ENCODE measurements at regions of chr1 and their contacts with region 1.

Region 1: DNA sequence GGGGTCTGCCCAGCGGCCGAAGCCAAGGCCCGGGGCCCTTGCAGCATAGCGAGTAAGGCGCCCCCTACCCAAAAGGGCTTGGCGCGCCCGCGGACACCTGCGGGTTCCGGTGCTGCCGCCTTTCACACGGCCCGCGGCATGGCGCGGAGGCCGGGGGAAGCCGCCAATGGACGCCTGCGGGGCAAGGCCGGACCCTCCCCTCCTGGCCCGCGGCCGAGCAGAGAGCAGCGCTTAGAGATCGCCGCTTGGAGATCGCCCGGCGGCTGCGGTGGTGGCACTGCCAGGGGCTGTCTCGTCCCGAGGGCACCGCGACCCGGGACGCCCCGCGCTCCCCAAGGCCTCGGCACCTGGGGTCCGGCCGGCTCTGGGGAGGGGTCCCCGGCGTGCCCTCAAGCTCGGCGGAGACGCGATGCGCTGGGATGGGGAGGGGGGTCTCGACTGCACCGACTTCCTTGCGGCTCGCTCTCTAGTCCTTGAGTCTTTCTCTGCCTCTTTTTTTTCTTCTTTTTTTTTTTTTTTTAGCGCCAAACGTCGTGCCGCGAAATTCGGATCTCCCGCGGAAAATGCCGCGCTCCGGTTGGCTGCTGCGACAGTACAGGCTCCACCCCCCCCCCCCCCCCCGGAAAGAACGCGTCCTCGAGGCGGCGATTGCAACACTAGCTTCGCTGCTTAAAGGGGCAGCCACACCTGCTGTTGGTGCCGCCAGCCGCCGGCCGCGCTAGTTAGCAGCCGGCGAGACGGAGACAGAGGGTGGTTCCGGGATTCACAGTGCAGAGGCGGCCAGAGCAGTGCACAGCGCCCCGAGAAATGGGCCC is at the start of gene E2F2:
- DNase-seq: peak; percentile 97
- H3K4me3 ChIP-seq: peak within 1 kb of the TSS; percentile 84
- H3K27ac ChIP-seq: peak within 1 kb of the TSS; percentile 98
- H3K4me1 ChIP-seq: peaks cover 67% of the 10 kb centered on the region
- CTCF ChIP-seq: peak; percentile 60; the same call in 1 of the 2 replicates
- total RNA-seq, gene E2F2: 176 and 203 TPM in 2 replicates

Region 2: GRCh38 chr1:23344111-23344986 is 186.6 kb before region 1 on chr1 and contains the start of gene HNRNPR:
- CTCF ChIA-PET with region 1: no interaction called
- POLR2A ChIA-PET with region 1: interaction called, 8 read pairs
- intact Hi-C with region 1: loop called (anchors 5 kb)
- DNase-seq: peak; percentile 100
- H3K4me3 ChIP-seq: peak within 1 kb of the TSS; percentile 94
- H3K27ac ChIP-seq: peak within 1 kb of the TSS; percentile 71
- H3K4me1 ChIP-seq: peaks cover 33% of the 10 kb centered on the region
- CTCF ChIP-seq: no peak
- total RNA-seq, gene HNRNPR: 193 and 260 TPM in 2 replicates

Region 3: GRCh38 chr1:23559136-23559984 is 28.4 kb after region 1 on chr1 and contains the start of gene ID3:
- CTCF ChIA-PET with region 1: no interaction called
- POLR2A ChIA-PET with region 1: interaction called, 11 read pairs
- intact Hi-C with region 1: no loop called
- DNase-seq: peak; percentile 97
- H3K4me3 ChIP-seq: peak within 1 kb of the TSS; percentile 94
- H3K27ac ChIP-seq: peak within 1 kb of the TSS; percentile 97
- H3K4me1 ChIP-seq: peaks cover 68% of the 10 kb centered on the region
- CTCF ChIP-seq: 0 out of 2 replicates have a peak, but pooled peaks have one; percentile 13
- total RNA-seq, gene ID3: 1,286 and 1,658 TPM in 2 replicates

Region 4: DNA sequence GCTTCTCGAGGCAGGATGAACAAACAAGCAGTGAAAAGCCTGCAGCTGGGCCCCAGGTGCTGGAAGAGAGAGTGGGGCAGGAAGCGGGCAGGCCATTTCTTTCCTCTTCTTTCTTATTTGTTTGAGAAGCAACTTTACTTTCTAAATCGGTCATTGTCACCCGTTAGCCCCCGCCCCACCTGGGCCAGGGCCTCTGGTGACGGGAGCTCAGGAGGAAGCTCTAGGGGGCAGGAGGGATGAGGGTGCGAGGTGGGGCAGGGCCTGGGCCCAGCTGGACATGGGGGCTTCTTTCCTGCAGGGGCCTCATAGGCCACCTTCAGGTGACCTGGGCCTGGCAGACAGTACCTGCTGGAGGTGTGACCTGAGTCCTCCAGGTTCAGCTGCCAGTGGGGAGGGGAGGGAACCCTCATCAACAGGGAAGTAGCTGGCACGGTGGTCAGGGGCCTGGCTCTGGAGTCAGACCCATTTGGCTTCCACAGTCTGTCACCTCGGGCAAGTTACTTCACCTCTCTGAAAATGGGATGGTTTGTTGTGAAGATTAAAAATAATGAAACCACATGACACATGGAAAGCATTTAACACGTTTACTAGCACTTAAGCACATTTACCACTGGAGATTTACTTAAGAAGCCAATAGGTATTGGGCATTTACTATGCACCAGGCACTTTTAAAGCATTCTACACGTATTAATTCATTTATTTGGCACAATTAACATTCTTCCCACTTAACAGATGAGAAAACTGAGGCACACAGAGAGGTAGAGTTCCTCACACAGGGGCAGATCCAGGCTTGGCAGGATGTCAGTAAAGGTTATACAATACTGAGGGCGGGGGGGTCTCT is 82.5 kb after region 1 on chr1:
- CTCF ChIA-PET with region 1: no interaction called
- POLR2A ChIA-PET with region 1: interaction called, 35 read pairs
- intact Hi-C with region 1: no loop called
- DNase-seq: peak; percentile 96
- H3K4me3 ChIP-seq: peak overlapping the region; percentile 64
- H3K27ac ChIP-seq: peak overlapping the region; percentile 99
- H3K4me1 ChIP-seq: peaks cover 98% of the 10 kb centered on the region
- CTCF ChIP-seq: peak; percentile 46; the same call in 1 of the 2 replicates

Region 5: DNA sequence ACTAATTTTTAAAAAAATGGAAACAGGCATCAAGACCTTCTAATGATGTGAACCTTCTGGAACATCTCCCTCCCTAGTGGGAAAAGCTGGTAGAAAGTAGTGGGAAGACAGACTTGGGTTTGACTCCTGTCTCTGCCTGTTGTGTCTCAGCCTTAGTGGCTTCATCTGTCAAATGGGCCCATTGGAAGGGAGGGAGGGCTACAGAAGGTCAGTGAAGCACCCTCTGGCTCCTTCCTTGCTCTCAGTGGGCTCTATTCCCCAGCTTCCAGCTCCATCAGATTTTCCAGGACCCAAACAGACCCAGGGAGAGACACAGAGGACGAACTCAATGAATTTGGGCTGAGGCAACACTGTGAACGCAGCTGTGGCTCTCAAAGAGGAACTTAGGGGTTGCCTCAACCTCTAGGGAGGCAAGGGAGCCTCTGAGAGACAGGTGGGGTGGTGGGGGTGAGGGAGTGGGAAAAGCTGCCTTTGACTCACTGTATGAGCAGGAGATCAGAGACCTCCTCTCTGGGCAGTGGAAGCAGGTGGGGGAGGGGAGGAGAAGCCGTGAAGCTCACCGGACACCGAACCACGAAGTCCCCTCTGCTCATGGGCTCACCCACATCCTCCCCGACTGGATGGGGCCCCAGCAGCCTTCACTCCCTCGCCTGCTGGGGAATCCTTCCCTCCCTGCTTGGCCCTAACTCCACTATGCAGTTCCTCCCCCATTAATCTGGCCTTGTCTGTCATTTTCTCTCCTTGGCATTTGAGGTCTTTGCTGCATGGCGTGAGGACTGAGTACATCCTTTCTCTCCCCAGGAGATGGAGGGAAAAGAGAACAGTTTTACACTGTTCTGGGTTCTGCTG is 377.8 kb after region 1 on chr1:
- CTCF ChIA-PET with region 1: no interaction called
- POLR2A ChIA-PET with region 1: no interaction called
- intact Hi-C with region 1: loop called (anchors 5 kb)
- DNase-seq: peak; percentile 98
- H3K4me3 ChIP-seq: peak overlapping the region; percentile 76
- H3K27ac ChIP-seq: peak overlapping the region; percentile 95
- H3K4me1 ChIP-seq: peaks cover 92% of the 10 kb centered on the region
- CTCF ChIP-seq: no peak

Region 6: GRCh38 chr1:24744911-24745710 is 1214.2 kb after region 1 on chr1 and contains the start of gene CLIC4:
- CTCF ChIA-PET with region 1: no interaction called
- POLR2A ChIA-PET with region 1: no interaction called
- intact Hi-C with region 1: loop called (anchors 5 kb)
- DNase-seq: peak; percentile 99
- H3K4me3 ChIP-seq: peak within 1 kb of the TSS; percentile 94
- H3K27ac ChIP-seq: peak within 1 kb of the TSS; percentile 93
- H3K4me1 ChIP-seq: peaks cover 63% of the 10 kb centered on the region
- CTCF ChIP-seq: 0 out of 2 replicates have a peak, but pooled peaks have one; percentile 31
- total RNA-seq, gene CLIC4: 35.5 and 35.7 TPM in 2 replicates

Measured in OCI-LY7 (cell line).